Activated B cell treated with CpG ODN at 0.5 μM for 24 hours (primary cell): ENCODE measurements at regions of chr9 and their contacts with region 1.

Region 1: GRCh38 chr9:97921959-97922724 is at the start of gene TRMO:
- DNase-seq: peak; percentile 97
- ATAC-seq: peak; percentile 74
- H3K4me3 Mint-ChIP-seq: peak within 1 kb of the TSS; percentile 85
- H3K27ac Mint-ChIP-seq: peak within 1 kb of the TSS; percentile 95
- H3K4me1 Mint-ChIP-seq: peaks cover 57% of the 10 kb centered on the region
- H3K27me3 Mint-ChIP-seq: peaks cover 2% of the 10 kb centered on the region
- CTCF ChIP-seq: no peak
- total RNA-seq, gene TRMO: 25.3 and 32.4 TPM in 2 replicates

Region 2: GRCh38 chr9:97696803-97697601 is 225.1 kb before region 1 on chr9 and contains the start of gene XPA:
- CTCF ChIA-PET with region 1: interaction called, 3 read pairs
- POLR2A ChIA-PET with region 1: interaction called, 14 read pairs
- intact Hi-C with region 1: loop called (anchors 1 kb)
- DNase-seq: peak; percentile 96
- ATAC-seq: peak; percentile 93
- H3K4me3 Mint-ChIP-seq: peak within 1 kb of the TSS; percentile 90
- H3K27ac Mint-ChIP-seq: peak within 1 kb of the TSS; percentile 94
- H3K4me1 Mint-ChIP-seq: peaks cover 60% of the 10 kb centered on the region
- H3K27me3 Mint-ChIP-seq: peaks cover 5% of the 10 kb centered on the region
- CTCF ChIP-seq: no peak
- total RNA-seq, gene XPA: 14.4 and 18.1 TPM in 2 replicates

Region 3: GRCh38 chr9:97954550-97954989 is 32.4 kb after region 1 on chr9:
- CTCF ChIA-PET with region 1: interaction called, 7 read pairs
- POLR2A ChIA-PET with region 1: interaction called, 9 read pairs
- intact Hi-C with region 1: loop called (anchors 1 kb)
- DNase-seq: no peak
- ATAC-seq: peak; percentile 82
- H3K4me3 Mint-ChIP-seq: no peak overlapping the region
- H3K27ac Mint-ChIP-seq: no peak overlapping the region
- H3K4me1 Mint-ChIP-seq: no peaks in the 10 kb centered on the region
- H3K27me3 Mint-ChIP-seq: peaks cover 9% of the 10 kb centered on the region
- CTCF ChIP-seq: no peak

Region 4: DNA sequence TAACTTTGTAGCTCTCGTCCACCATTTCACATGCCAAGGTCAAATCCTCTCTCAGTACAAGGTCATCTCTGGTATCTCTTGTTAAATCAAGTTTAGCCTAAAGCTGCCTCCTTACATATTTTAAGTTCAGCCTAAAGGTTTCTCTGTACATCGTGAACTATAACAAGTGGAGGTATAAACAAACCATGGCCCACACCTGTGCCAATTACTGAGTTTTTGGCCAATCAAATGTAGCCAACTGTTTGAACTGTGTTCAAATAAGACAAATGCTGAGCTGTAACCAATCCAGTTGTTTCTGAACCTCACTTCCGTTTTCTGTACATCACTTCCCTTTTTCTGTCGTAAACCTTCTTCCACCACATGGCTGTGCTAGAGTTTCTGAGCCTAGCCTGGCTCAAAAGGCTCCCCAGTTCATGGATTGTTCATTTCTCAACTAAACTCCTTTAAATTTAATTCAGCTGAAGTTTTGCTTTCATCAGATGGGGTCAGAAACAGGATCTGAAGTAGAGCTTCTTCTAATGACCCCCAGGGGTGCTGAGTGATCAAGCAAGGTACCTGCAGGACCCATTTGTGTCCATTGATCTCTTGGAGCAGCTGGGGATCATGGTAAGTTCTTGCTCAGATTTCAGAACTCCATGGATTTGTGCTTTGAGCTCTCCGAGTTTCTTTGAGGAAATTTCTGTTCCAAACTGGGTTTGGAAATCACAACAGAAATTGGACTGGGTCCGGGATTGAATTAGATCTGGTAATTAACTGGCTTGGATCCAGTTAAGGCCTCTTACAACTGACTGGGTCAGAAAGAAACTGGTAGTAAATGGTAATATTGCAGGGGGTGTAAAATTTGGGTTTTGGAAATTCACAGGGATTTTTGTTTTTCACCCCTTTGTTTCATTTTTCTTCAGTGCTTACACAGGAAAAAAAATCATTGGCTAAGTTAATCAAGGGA is 123.4 kb after region 1 on chr9:
- CTCF ChIA-PET with region 1: interaction called, 4 read pairs
- POLR2A ChIA-PET with region 1: interaction called, 21 read pairs
- intact Hi-C with region 1: loop called (anchors 1 kb)
- DNase-seq: no peak
- ATAC-seq: peak; percentile 87
- H3K4me3 Mint-ChIP-seq: peak overlapping the region; percentile 83
- H3K27ac Mint-ChIP-seq: peak overlapping the region; percentile 84
- H3K4me1 Mint-ChIP-seq: peaks cover 53% of the 10 kb centered on the region
- H3K27me3 Mint-ChIP-seq: peaks cover under 1% of the 10 kb centered on the region
- CTCF ChIP-seq: no peak

Region 5: GRCh38 chr9:98118640-98119601 is 196.8 kb after region 1 on chr9 and contains the start of gene TRIM14:
- CTCF ChIA-PET with region 1: interaction called, 3 read pairs
- POLR2A ChIA-PET with region 1: interaction called, 5 read pairs
- intact Hi-C with region 1: loop called (anchors 5 kb)
- DNase-seq: peak; percentile 51
- ATAC-seq: peak; percentile 76
- H3K4me3 Mint-ChIP-seq: peak within 1 kb of the TSS; percentile 91
- H3K27ac Mint-ChIP-seq: peak within 1 kb of the TSS; percentile 85
- H3K4me1 Mint-ChIP-seq: peaks cover 42% of the 10 kb centered on the region
- H3K27me3 Mint-ChIP-seq: no peaks in the 10 kb centered on the region
- CTCF ChIP-seq: no peak
- total RNA-seq, gene TRIM14: 11.7 and 12.8 TPM in 2 replicates

Region 6: DNA sequence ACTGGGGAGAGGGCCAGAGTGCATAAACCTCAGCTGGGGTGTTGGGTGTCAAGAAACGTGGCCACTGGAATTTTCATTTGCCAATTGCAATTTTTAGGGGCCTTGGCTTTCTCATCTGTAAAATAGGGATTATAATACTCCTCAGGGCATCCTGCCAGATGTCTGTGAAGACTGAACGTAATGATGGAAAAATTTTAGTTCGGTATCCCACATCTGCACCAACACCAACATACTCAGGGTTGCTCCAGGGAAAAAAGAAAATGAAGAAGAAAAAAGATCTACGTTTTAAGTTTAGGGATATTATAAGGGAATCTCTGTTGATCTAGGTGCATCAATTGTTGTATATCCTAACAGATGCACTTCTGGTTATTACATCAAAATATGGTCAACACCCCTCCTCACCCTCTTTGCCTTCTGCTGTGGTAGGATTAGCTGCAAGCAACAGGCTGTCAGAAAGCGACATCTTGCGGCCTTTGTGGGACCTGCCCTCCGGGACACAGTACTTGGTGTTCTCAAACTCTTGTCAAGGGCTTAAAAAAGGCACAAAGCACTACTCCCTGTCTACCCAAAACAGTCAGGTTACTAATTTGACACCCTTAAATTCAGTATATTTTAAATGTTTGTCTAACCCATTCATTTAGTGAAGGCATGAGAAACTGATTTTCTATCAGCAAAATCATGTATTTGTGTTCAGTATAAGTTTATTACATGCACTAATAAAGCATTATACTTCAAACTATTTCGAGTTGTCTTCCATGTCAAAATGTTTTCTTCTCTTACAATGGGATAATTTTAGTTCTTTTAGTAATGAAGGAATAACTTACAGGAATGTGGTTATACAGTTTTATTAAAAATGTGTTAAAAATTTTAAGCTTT is 341.6 kb after region 1 on chr9:
- CTCF ChIA-PET with region 1: interaction called, 14 read pairs
- POLR2A ChIA-PET with region 1: no interaction called
- intact Hi-C with region 1: loop called (anchors 1 kb)
- DNase-seq: peak; percentile 58
- ATAC-seq: peak; percentile 100
- H3K4me3 Mint-ChIP-seq: no peak overlapping the region
- H3K27ac Mint-ChIP-seq: no peak overlapping the region
- H3K4me1 Mint-ChIP-seq: no peaks in the 10 kb centered on the region
- H3K27me3 Mint-ChIP-seq: peaks cover 5% of the 10 kb centered on the region
- CTCF ChIP-seq: peak; percentile 86